Adrenal gland (tissue), 19 donors: ENCODE measurements at regions of chr3 and their contacts with region 1.

Region 1: GRCh38 chr3:40516201-40516600 is 8.6 kb upstream of the ZNF621 start:
- DNase-seq: no peak
- H3K4me3 ChIP-seq: no peak overlapping the region
- H3K27ac ChIP-seq: no peak overlapping the region
- H3K4me1 ChIP-seq: no peaks in the 10 kb centered on the region
- H3K27me3 ChIP-seq: no peaks in the 10 kb centered on the region
- CTCF ChIP-seq: no peak
- POLR2A ChIP-seq: no peak

Region 2: DNA sequence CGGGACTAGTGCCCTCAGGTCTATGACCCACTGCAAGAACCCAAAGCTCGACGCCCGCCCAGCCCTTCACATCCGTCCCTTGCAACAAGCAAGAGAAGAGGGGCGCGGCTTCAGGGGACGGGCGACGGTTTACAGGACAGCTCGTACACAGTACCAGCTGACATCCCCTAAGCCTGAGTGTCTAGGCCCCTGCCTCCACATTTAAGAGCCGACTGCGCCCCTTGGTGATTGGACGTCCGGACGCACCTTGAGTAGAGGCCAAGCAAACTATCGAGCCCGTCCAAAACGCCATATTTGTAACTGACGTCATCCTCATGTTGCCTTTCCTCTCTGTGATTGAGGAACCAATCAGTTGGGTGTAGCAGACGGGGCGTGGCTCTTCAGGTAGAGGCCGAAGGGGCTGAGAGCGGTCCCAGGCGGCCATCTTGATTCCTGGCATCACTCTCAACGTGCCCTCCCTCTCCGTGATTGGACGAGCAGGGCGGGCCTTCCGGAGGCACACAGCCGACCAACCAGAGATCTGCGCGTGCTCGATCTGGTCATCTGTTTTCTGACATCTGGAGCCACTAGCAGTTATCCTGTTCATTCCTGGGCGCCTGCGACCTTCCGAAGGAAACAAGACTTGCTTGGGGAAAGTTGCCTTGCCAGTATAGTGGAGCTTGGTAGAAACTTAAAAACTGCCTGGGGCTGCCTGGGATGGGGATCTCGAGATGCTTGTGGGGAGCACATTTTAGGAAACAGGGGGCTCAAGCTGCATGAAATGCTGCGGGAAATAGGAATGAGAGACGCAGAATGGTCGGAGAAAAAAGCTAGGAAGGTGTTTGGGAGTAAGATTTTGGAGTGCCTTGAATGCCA is 63.1 kb before region 1 on chr3:
- intact Hi-C with region 1: loop called in 1 of 2 experiments (anchors 10 kb)
- DNase-seq: peak; percentile 98 to 100 (median 99)
- H3K4me3 ChIP-seq: peak overlapping the region; percentile 52 to 80 (median 64)
- H3K27ac ChIP-seq: peak overlapping the region; percentile 87 to 95 (median 94)
- H3K4me1 ChIP-seq: peaks cover 12 to 29% of the 10 kb centered on the region in 2 donors
- H3K27me3 ChIP-seq: no peaks in the 10 kb centered on the region
- CTCF ChIP-seq: no peak
- POLR2A ChIP-seq: peak; percentile 75 to 96

Region 3: GRCh38 chr3:40731445-40731844 is 215.2 kb after region 1 on chr3:
- intact Hi-C with region 1: no loop called
- DNase-seq: no peak
- H3K4me3 ChIP-seq: no peak overlapping the region
- H3K27ac ChIP-seq: no peak overlapping the region
- H3K4me1 ChIP-seq: no peaks in the 10 kb centered on the region
- H3K27me3 ChIP-seq: no peaks in the 10 kb centered on the region
- CTCF ChIP-seq: no peak
- POLR2A ChIP-seq: no peak

Region 4: DNA sequence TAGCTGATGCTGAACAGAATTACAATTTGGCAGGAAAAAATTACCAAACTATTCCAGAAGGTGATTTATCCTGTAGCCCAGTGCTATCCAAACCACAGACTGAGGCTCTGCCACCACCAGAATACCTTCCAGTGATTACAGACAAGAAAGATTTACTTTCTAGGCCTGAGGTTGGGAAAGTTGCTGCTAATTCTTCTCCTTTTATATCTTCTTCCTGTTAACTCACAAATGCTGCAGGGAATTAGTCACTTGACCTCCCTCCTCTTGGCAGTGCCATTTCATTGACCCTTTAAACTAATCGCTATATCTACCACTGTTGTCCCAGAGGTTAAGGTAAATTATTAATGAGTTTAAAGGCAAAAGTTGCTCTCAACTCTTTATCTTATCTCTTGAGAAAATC is 801.5 kb after region 1 on chr3:
- intact Hi-C with region 1: no loop called
- DNase-seq: peak in 2 of 7 donors; percentile 5 to 7
- H3K4me3 ChIP-seq: no peak overlapping the region
- H3K27ac ChIP-seq: no peak overlapping the region
- H3K4me1 ChIP-seq: peaks cover 0 to 8% of the 10 kb centered on the region in 2 donors
- H3K27me3 ChIP-seq: no peaks in the 10 kb centered on the region
- CTCF ChIP-seq: no peak
- POLR2A ChIP-seq: no peak